ENCODE measurements at regions of chr3 and their contacts with region 1.

Region 1: DNA sequence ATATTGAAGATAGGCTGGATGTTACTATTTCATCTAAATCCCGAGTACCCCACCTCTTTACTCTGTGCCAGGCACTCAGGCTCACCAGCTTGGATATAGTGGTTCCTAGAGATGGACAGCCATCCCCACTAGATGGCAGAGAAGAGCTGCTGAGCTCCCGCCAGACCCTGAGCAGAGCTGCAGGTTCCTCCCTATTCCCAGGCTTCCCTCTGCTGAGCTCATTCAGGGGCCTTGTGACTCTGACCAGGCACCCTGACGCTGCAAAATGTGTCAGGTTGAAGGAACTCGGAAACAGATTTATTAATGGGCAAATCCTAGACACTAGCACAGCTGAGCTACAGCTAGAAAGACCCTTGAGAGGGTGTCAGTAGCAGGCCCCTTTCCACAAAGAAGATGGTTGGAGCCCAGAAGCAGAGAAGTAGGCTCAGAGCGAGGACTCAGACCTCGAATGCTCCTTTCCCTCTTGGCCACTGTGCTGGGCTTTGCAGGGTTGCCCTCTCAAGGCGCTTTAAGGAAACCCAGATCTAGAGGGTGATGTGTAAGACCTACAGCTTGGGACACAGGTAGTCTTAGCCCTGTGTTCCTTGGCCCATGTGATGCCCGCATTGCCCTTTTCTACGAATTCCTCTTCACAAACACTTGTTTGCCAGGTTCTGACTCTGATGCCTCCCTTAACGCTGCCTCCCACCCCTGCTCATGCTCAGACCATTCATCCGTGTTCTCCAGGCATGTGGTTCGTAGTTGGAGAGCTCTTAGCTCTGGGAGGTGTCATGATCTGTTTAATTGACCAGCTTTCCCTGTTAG is 38.0 kb upstream of the RHO start:
- DNase-seq: peak; percentile 50 to 73
- H3K4me3 ChIP-seq: no peak overlapping the region
- H3K27ac ChIP-seq: no peak overlapping the region; the same call in 1 of the 2 replicates
- H3K4me1 ChIP-seq: peaks cover 5 to 18% (median 9%) of the 10 kb centered on the region in 4 experiments
- H3K27me3 ChIP-seq: no peaks in the 10 kb centered on the region
- CTCF ChIP-seq: peak; percentile 79 to 94 (median 91)
- EP300 ChIP-seq: no peak
- POLR2A ChIP-seq: no peak
- RAD21 ChIP-seq: peak; percentile 98 to 99

Region 2: DNA sequence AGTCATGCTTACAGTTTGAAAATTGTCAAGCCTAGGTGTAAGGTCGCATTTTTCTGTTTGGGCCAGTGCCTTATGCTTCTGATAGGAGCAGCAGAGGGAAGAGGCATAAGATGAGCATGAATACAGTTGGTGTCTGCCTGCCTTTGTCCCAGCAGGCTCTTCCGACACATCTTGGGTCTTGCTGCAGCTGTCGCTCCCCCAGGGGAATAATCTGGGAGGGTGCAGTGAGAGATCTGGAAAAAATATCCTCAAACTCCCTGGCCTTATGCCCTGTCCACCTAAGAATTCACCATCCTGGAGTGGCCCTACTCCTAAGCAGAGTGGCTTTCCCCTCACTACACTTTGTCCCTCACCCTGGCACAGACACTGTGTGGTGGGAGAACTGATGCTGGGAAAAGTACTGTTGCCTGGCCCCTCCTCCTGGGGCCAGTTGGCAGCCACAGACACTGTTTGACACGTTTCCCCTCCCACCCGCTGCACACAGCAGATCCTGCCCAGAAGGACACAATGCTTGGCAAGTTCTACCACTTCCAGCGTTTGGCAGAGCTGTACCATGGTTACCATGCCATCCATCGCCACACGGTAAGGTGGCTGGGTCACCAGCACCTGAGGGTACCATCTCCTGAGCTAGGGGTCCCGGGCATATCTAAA is 16.9 kb after region 1 on chr3:
- CTCF ChIA-PET with region 1: interaction called, 41 read pairs
- POLR2A ChIA-PET with region 1: interaction called, 5 read pairs
- DNase-seq: no peak
- H3K4me3 ChIP-seq: no peak overlapping the region
- H3K27ac ChIP-seq: no peak overlapping the region
- H3K4me1 ChIP-seq: no peaks in the 10 kb centered on the region
- H3K27me3 ChIP-seq: no peaks in the 10 kb centered on the region
- CTCF ChIP-seq: no peak
- EP300 ChIP-seq: no peak
- POLR2A ChIP-seq: no peak
- RAD21 ChIP-seq: no peak

Region 3: GRCh38 chr3:129567176-129567705 is 76.8 kb after region 1 on chr3:
- CTCF ChIA-PET with region 1: interaction called, 20 read pairs
- POLR2A ChIA-PET with region 1: no interaction called
- DNase-seq: no peak
- H3K4me3 ChIP-seq: no peak overlapping the region
- H3K27ac ChIP-seq: no peak overlapping the region
- H3K4me1 ChIP-seq: no peaks in the 10 kb centered on the region
- H3K27me3 ChIP-seq: no peaks in the 10 kb centered on the region
- CTCF ChIP-seq: no peak
- EP300 ChIP-seq: no peak
- POLR2A ChIP-seq: no peak
- RAD21 ChIP-seq: no peak

Region 4: DNA sequence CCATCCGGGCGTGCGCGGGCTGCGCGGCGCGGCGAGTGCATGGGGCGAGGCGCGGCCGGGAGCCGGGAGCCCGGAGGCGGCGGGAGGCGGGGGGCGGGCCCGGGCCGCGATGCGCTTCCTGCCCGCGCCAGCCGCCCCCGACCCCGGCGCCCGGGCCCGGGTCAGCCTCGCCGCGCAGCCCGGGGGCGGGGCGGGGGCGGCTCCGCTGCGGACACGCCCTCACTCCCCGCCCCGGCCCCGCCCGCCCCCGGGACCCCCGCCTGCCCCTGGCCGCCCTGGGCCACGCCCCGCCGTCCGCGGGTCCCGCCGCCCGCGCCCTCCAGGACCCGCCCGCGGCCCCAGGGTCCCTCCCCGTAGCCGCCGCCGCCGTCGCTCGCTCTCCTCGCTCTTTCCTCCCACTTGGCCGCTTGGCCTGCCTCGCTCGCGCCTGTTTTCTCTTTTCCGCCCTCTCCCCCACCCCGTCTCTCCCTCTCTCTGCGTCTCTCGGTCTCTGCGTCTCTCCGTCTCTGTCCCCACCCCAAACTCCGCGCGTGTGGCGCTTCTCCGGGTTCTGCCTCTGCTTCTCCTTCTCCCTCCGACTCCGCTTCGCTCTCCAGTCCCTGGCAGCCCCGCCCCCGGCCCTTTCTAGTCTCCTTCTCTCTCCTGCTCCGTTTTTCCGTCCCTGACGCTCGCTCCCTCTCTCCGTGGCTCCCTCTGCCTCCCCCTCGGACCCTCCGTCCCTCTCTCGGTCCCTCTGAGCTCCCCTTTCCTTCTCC is 116.4 kb after region 1 on chr3 and contains the start of gene PLXND1:
- CTCF ChIA-PET with region 1: interaction called, 11 read pairs
- POLR2A ChIA-PET with region 1: no interaction called
- DNase-seq: peak in 1 of 2 experiments; percentile 78
- H3K4me3 ChIP-seq: peak within 1 kb of the TSS; percentile 46 to 76 (median 62)
- H3K27ac ChIP-seq: no peak within 1 kb of the TSS
- H3K4me1 ChIP-seq: peaks cover 4 to 52% (median 43%) of the 10 kb centered on the region in 4 experiments
- H3K27me3 ChIP-seq: peaks cover 7 to 31% (median 22%) of the 10 kb centered on the region in 4 experiments; a peak in 6 of 7 replicates
- CTCF ChIP-seq: no peak
- EP300 ChIP-seq: no peak
- POLR2A ChIP-seq: no peak
- RAD21 ChIP-seq: no peak
- total RNA-seq, gene PLXND1: 60.2 and 66.4 TPM in 2 replicates

Region 5: GRCh38 chr3:129645290-129645689 is 154.8 kb after region 1 on chr3:
- CTCF ChIA-PET with region 1: interaction called, 15 read pairs
- POLR2A ChIA-PET with region 1: no interaction called
- DNase-seq: no peak
- H3K4me3 ChIP-seq: no peak overlapping the region
- H3K27ac ChIP-seq: no peak overlapping the region
- H3K4me1 ChIP-seq: peaks cover 0 to 2% (median 0%) of the 10 kb centered on the region in 4 experiments; a peak in 2 of 7 replicates
- H3K27me3 ChIP-seq: no peaks in the 10 kb centered on the region
- CTCF ChIP-seq: no peak
- EP300 ChIP-seq: no peak
- POLR2A ChIP-seq: no peak
- RAD21 ChIP-seq: no peak

Measured in H1 (cell line).